ENCODE measurements at regions of chr19 and their contacts with region 1.

Region 1: GRCh38 chr19:55418185-55418584 is 10.6 kb upstream of the UBE2S start:
- DNase-seq: peak in 1 of 2 donors; percentile 35
- H3K4me3 ChIP-seq: no peak overlapping the region
- H3K27ac ChIP-seq: no peak overlapping the region
- H3K4me1 ChIP-seq: no peaks in the 10 kb centered on the region
- H3K27me3 ChIP-seq: peaks cover 0 to 10% of the 10 kb centered on the region in 2 donors
- CTCF ChIP-seq: peak; percentile 38 to 68 (median 68)
- POLR2A ChIP-seq: no peak

Region 2: DNA sequence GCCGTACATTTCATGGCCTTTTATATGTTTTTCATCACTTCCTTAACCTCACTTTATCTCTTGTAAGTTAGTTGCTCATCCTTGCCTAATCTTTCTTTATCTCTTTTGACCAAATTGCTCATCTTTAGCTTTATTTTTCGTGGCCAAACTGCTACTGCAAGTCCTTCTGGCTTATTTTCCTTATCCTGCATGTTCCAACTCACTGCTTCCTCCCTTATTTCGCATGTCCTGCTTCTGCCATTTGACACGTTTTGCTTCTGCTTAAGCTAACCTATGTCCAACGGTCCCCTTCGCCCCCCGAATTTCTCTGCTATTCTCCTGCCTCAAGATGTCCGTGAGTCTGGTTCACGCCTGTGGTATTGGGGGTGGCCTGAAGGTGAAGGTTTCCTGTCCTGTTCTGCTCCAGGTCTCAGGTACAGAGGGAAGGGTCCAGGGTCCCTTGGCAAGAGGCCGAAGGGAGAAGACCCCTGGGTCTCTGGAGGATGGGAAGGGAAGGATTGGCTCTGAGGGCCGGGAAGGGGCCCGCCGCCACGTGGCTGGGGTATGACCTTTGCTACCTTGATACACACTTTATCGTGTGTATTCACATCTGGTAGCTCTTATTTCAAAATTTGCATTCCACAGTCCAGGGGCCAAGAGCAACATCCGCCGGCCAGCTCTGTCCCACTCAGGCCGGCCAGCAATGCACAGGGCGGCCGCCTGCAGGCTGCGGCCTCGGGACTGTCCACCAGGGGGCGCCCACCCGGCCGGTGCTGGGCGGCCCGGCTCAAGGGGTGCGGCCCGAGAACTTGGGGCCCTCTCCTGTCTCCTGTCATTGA is 49.3 kb after region 1 on chr19:
- intact Hi-C with region 1: no loop called
- DNase-seq: no peak
- H3K4me3 ChIP-seq: no peak overlapping the region
- H3K27ac ChIP-seq: peak overlapping the region in 1 of 2 donors; percentile 14
- H3K4me1 ChIP-seq: no peaks in the 10 kb centered on the region
- H3K27me3 ChIP-seq: no peaks in the 10 kb centered on the region
- CTCF ChIP-seq: peak; percentile 89 to 94 (median 91)
- POLR2A ChIP-seq: no peak

Region 3: GRCh38 chr19:55503502-55504251 is 85.5 kb after region 1 on chr19:
- intact Hi-C with region 1: loop called (anchors 5 kb)
- DNase-seq: peak; percentile 90 to 91
- H3K4me3 ChIP-seq: peak overlapping the region; percentile 43 to 73 (median 53)
- H3K27ac ChIP-seq: peak overlapping the region; percentile 77 to 80
- H3K4me1 ChIP-seq: peaks cover 0 to 3% of the 10 kb centered on the region in 2 donors
- H3K27me3 ChIP-seq: no peaks in the 10 kb centered on the region
- CTCF ChIP-seq: peak; percentile 97 to 98 (median 98)
- POLR2A ChIP-seq: no peak

Region 4: DNA sequence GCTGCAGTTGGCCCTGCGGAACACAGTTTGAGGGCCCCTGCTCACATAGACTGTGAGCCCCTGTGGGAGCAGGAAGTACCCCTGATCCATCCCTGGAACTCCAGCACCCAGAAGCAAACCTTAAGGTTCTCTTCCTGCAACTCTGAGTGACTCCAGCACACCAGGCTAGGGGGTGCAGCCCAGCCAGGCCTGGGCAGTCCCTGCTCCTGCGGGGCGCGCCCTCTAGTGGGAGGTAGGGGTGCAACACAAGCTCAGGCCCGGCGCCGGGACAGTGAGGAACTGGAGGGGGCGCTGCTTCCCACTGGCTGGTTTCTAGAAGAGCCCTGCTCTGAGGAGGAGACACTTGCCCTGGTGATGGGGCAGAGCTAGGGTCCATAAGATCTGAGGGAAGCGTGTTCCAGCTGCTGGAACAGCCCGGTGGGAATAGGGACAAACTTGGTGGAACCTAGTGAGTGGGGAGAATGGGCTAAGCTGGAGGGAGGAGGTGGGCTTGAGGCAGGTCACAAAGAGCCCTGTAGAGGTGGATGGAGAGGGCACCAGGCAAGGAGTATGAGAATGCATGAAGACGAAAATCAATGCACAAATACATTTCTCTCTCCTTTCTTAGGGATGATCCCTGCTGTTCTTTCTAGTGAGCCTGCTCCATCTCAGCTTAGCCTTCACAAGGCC is 891.5 kb after region 1 on chr19:
- intact Hi-C with region 1: no loop called
- DNase-seq: no peak
- H3K4me3 ChIP-seq: no peak overlapping the region
- H3K27ac ChIP-seq: no peak overlapping the region
- H3K4me1 ChIP-seq: no peaks in the 10 kb centered on the region
- H3K27me3 ChIP-seq: no peaks in the 10 kb centered on the region
- CTCF ChIP-seq: peak in 1 of 3 donors; percentile 28
- POLR2A ChIP-seq: no peak